Panc1 (cell line): ENCODE measurements at regions of chr15 and their contacts with region 1.

Region 1: DNA sequence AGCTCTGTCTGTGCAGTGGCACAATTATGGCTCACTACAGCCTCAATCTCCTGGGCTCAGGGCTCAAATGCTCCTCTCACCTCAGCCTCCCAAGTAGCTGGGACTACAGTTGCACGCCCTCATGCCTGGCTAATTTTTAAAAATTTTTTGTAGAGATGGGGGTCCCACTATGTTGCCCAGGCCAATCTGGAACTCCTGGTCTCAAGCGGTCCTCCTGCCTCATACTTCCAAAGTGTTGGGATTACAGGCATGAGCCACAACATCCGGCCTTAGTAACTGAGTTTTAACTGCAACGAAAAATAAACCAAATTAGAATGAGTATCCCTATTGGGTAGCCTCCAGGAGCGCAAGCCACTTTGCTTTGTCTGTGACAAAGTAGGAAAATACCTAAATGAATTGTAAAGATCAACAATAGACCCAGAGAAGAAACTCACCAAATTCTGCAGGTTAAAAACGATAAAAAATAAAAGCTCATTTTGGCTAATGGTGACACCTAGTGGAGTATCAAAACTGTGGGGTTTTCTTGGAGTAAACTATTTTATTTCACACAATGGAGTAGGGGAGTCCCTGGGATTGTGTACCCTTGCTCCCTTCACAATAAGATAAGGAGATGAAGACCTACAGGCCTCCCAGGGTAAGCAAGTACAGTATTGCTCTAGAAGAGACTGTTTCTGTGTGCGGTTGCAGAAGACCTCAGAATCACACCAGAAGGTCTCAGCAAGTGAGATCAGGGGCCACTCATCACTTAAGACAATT is 21.0 kb upstream of the CA12 start:
- DNase-seq: peak; percentile 25
- ATAC-seq: peak; percentile 83
- H3K4me3 ChIP-seq: no peak overlapping the region
- H3K27ac ChIP-seq: no peak overlapping the region
- H3K4me1 ChIP-seq: no peaks in the 10 kb centered on the region
- H3K27me3 ChIP-seq: no peaks in the 10 kb centered on the region
- CTCF ChIP-seq: peak; percentile 74

Region 2: DNA sequence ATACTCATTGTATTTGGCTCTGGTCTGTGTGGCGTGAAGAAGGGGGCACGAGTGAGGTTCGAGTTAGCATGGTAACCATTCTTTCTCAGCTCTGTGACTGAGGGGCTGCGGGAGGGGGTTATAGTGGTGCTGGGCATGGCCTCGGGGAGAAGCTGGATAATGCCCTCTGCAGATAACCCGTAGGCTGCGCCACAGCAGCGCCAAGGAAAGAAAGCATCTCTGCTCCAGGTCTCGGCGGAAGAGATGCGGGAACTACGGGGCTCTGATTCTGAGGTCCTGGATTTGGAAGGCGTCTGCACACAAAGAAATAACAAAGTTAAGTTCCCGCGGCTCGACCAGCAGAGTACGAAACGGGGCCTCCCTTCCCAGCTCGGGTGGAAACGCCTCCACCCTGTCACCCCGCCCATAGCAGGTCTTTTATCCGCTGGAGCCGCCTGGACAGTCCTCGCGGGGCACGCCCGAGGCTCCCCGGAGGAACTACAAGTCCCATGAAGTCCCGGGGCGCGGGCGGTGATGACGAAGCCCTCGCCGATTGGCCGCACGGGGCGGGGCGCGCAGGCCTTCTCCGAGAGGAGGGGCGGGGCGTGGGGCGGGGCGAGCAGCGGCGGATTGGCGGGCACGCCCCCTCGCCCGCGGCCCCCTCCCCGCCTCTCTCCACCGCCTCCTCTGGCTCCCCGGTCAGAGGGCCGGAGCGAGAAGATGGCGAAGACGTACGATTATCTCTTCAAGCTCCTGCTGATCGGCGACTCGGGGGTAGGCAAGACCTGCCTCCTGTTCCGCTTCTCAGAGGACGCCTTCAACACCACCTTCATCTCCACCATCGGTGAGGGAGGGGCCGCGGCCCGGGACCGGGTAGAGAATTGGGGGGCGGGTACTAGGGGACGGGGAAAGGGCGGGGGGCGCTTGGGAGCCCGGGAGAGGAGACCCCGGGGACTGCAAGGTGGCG is 213.5 kb before region 1 on chr15 and contains the start of gene RAB8B:
- CTCF ChIA-PET with region 1: no interaction called
- POLR2A ChIA-PET with region 1: no interaction called
- in situ Hi-C with region 1: no loop called
- intact Hi-C with region 1: loop called (anchors 10 kb)
- DNase-seq: peak; percentile 62
- ATAC-seq: peak; percentile 99
- H3K4me3 ChIP-seq: peak within 1 kb of the TSS; percentile 67 to 78
- H3K27ac ChIP-seq: peak within 1 kb of the TSS; percentile 76
- H3K4me1 ChIP-seq: peaks cover 18% of the 10 kb centered on the region
- H3K27me3 ChIP-seq: no peaks in the 10 kb centered on the region
- CTCF ChIP-seq: no peak
- total RNA-seq, gene RAB8B: 17.6 TPM

Region 3: GRCh38 chr15:63288778-63289378 is 113.8 kb before region 1 on chr15:
- CTCF ChIA-PET with region 1: interaction called, 9 read pairs
- POLR2A ChIA-PET with region 1: no interaction called
- in situ Hi-C with region 1: no loop called
- intact Hi-C with region 1: loop called (anchors 1 kb)
- DNase-seq: no peak
- ATAC-seq: peak; percentile 90
- H3K4me3 ChIP-seq: no peak overlapping the region
- H3K27ac ChIP-seq: no peak overlapping the region
- H3K4me1 ChIP-seq: no peaks in the 10 kb centered on the region; the same call in 1 of the 2 replicates
- H3K27me3 ChIP-seq: no peaks in the 10 kb centered on the region
- CTCF ChIP-seq: peak; percentile 72; the same call in 1 of the 2 replicates

Region 4: GRCh38 chr15:63306492-63307073 is 96.1 kb before region 1 on chr15:
- CTCF ChIA-PET with region 1: interaction called, 7 read pairs
- POLR2A ChIA-PET with region 1: no interaction called
- in situ Hi-C with region 1: loop called (anchors 5 kb)
- intact Hi-C with region 1: no loop called
- DNase-seq: no peak
- ATAC-seq: no peak
- H3K4me3 ChIP-seq: no peak overlapping the region
- H3K27ac ChIP-seq: no peak overlapping the region
- H3K4me1 ChIP-seq: no peaks in the 10 kb centered on the region
- H3K27me3 ChIP-seq: no peaks in the 10 kb centered on the region
- CTCF ChIP-seq: no peak

Region 5: GRCh38 chr15:63449731-63450130 is 47.1 kb after region 1 on chr15:
- CTCF ChIA-PET with region 1: no interaction called
- POLR2A ChIA-PET with region 1: no interaction called
- in situ Hi-C with region 1: no loop called
- intact Hi-C with region 1: no loop called
- DNase-seq: no peak
- ATAC-seq: 0 out of 2 replicates have a peak, but pooled peaks have one; percentile 43
- H3K4me3 ChIP-seq: no peak overlapping the region
- H3K27ac ChIP-seq: no peak overlapping the region
- H3K4me1 ChIP-seq: no peaks in the 10 kb centered on the region
- H3K27me3 ChIP-seq: no peaks in the 10 kb centered on the region
- CTCF ChIP-seq: no peak